AG04449 (cell line): ENCODE measurements at regions of chr10 and their contacts with region 1.

Region 1: DNA sequence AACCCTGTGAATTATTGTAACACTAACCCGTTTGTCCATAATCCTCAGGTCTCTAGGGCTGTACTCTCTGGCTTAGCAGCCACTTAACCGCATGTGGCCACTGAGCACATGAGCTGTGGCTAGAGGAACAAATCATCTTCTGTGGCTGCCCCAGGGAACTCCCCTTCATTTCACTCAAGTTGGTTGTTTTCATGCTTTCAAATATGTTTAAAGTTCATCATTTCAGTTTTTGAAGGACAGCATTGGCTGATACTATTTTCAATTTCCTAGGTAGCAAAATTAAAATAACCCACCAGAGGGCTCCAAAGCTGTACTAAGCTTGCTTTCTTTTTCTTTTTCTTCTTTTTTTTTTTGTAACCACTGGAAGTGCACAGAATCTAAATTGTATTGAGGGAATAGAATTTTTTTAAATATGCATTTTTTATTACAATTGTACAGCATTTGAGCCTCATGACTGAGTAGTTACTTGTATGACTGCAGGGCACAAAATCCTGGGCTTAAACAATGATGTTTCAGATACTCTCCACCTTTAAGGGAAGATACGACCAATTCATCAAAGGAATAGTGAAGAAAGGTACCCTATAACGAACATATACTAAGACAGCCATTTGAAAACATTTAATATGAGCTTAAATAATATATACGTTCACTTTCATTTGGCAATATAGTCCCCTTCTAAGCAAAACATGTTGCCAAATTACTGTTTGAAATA is 38.6 kb downstream of the MRC1 start:
- DNase-seq: no peak
- H3K4me3 ChIP-seq: no peak overlapping the region
- CTCF ChIP-seq: peak; percentile 20

Region 2: DNA sequence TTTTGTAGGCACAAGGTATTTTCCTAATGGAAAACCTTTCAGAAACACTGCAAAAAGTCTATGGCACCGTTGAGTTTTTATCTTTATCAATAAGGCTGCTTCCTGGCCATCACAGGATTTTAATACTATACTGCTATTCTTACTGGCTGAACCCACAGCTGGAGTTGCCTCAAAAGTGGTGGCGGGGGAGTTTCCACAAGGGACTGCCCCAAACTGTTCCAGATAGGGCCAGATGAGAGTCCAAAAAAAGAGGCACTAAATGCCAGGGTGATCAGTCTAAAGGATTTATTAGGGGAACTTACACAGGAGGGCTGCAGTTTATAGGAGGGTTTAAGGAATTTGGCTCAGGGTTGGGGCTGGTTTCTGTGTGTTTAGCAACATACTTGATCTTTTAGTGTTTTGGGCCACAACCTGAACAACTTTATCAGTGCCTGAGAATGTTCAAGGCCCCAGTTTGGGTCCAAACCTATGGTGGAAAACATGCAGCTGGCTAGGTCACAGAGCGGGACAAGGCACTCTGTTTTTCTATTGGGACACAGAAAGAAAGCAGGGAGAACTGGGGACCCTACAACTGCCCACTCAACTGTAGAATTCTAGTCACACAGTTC is 162.4 kb before region 1 on chr10:
- CTCF ChIA-PET with region 1: no interaction called
- POLR2A ChIA-PET with region 1: no interaction called
- DNase-seq: no peak
- H3K4me3 ChIP-seq: no peak overlapping the region
- CTCF ChIP-seq: no peak

Region 3: DNA sequence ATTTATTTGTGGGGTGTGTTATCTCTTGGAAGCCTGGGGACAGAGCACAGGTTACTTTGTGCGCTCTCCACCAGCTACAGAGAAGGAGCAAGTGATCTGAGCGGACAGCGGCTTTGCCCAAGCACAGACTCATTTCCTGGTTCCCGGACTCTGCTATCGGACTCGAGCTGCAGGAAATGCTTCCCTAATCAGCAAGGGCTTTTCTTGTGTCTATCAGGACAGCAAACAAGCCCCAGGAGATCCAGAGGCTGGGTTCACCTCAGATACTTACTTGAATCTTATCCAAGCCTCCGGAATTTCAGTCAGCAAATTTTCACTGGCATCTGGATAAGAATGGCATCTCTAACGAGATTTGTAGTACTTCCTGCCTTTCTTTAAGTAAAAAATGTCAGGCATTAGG is 10.8 kb before region 1 on chr10:
- CTCF ChIA-PET with region 1: interaction called, 13 read pairs
- POLR2A ChIA-PET with region 1: interaction called, 3 read pairs
- DNase-seq: no peak
- H3K4me3 ChIP-seq: peak overlapping the region; percentile 31
- CTCF ChIP-seq: no peak

Region 4: GRCh38 chr10:17859492-17860156 is 11.9 kb after region 1 on chr10:
- CTCF ChIA-PET with region 1: interaction called, 13 read pairs
- POLR2A ChIA-PET with region 1: no interaction called
- DNase-seq: no peak
- H3K4me3 ChIP-seq: no peak overlapping the region
- CTCF ChIP-seq: no peak

Region 5: DNA sequence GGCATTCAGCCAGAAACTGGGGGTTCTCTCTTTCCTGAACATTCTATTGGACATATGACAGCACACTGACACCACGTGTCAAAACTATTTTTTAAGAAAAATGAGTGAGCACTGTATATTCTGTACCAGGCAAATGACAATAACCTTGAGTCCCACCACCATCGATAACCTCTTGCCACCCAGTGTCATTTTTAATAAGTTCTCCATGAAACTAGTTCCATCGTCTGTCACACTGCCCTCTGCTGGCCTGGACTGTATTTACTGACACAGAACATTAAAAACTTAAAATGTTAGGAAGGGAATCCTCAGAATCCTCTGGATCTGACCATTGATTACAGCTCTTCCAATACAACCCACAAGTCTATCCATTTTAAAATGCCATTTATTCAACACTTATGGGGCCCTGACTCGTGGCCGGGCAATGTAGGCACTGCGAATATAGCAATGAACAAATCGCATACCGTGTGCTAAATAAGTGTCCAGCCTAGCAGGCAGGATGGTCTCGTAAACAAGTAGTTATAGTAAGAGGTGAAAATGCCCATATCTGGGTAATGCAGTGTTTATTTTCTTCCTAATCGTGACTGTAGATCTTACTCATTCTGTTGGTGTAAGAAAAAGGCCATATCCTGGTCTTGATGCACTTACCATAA is 256.6 kb after region 1 on chr10:
- CTCF ChIA-PET with region 1: interaction called, 14 read pairs
- POLR2A ChIA-PET with region 1: no interaction called
- DNase-seq: no peak
- H3K4me3 ChIP-seq: no peak overlapping the region
- CTCF ChIP-seq: peak; percentile 55

Region 6: GRCh38 chr10:18214691-18215563 is 367.2 kb after region 1 on chr10:
- CTCF ChIA-PET with region 1: interaction called, 143 read pairs
- POLR2A ChIA-PET with region 1: no interaction called
- DNase-seq: no peak
- H3K4me3 ChIP-seq: no peak overlapping the region
- CTCF ChIP-seq: peak; percentile 78

Region 7: GRCh38 chr10:18238870-18239485 is 391.2 kb after region 1 on chr10:
- CTCF ChIA-PET with region 1: interaction called, 29 read pairs
- POLR2A ChIA-PET with region 1: no interaction called
- DNase-seq: no peak
- H3K4me3 ChIP-seq: no peak overlapping the region
- CTCF ChIP-seq: peak; percentile 50